CD8-positive, alpha-beta T cell (primary cell): ENCODE measurements at regions of chr11 and their contacts with region 1.

Region 1: DNA sequence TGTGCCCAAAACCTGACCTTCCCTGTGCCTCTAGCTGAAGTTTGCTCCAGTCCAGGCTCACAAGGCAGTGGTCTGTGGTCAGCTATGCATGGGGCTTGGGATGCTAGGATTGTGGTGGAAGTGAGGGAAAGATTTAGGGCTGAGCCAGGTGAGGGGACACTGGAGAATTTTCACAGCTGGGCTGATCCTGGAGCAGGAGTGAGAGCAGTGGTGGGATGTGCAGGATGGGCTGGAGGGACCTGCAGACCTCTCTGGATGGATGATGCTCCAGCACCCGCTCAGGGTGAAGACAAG is 23.9 kb upstream of the KDM2A start:
- DNase-seq: no peak
- ATAC-seq: no peak
- H3K4me3 ChIP-seq: no peak overlapping the region
- H3K4me3 Mint-ChIP-seq: no peak overlapping the region
- H3K27ac ChIP-seq: no peak overlapping the region
- H3K27ac Mint-ChIP-seq: no peak overlapping the region
- H3K4me1 ChIP-seq: peaks cover 6% of the 10 kb centered on the region
- H3K4me1 Mint-ChIP-seq: peaks cover 8% of the 10 kb centered on the region
- H3K27me3 ChIP-seq: no peaks in the 10 kb centered on the region
- H3K27me3 Mint-ChIP-seq: no peaks in the 10 kb centered on the region
- CTCF ChIP-seq: no peak

Region 2: GRCh38 chr11:66981976-66982578 is 113.1 kb before region 1 on chr11:
- CTCF ChIA-PET with region 1: no interaction called
- POLR2A ChIA-PET with region 1: no interaction called
- intact Hi-C with region 1: no loop called
- DNase-seq: peak in 6 of 9 experiments; percentile 17 to 42 (median 24)
- ATAC-seq: no peak
- H3K4me3 ChIP-seq: no peak overlapping the region
- H3K4me3 Mint-ChIP-seq: no peak overlapping the region
- H3K27ac ChIP-seq: no peak overlapping the region
- H3K27ac Mint-ChIP-seq: no peak overlapping the region
- H3K4me1 ChIP-seq: peaks cover 4% of the 10 kb centered on the region
- H3K4me1 Mint-ChIP-seq: peaks cover 7% of the 10 kb centered on the region
- H3K27me3 ChIP-seq: peaks cover 0 to 2% of the 10 kb centered on the region in 2 experiments
- H3K27me3 Mint-ChIP-seq: peaks cover 22% of the 10 kb centered on the region
- CTCF ChIP-seq: no peak

Region 3: DNA sequence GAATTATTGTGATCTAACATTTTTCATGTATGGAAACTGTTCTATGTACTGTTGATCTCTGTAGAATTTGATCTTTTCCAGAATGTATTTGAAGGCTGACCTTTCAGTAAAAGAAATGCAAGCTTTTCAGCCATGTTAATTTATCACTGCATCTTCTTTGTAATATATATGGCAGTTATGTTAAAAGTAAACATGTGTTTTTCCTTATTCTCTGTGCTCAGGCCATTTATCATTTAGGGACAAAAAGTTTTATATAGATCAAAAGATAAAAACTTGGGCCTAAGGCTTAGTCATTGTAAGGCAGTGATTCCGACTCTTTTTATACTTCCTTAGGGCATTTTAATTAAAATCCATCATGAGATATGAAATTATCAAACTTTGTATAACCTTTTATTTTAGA is 72.6 kb after region 1 on chr11:
- CTCF ChIA-PET with region 1: interaction called, 7 read pairs
- POLR2A ChIA-PET with region 1: no interaction called
- intact Hi-C with region 1: loop called in 1 of 2 experiments (anchors 1 kb)
- DNase-seq: no peak
- ATAC-seq: no peak
- H3K4me3 ChIP-seq: no peak overlapping the region
- H3K4me3 Mint-ChIP-seq: no peak overlapping the region
- H3K27ac ChIP-seq: no peak overlapping the region
- H3K27ac Mint-ChIP-seq: no peak overlapping the region
- H3K4me1 ChIP-seq: no peaks in the 10 kb centered on the region
- H3K4me1 Mint-ChIP-seq: peaks cover 48% of the 10 kb centered on the region
- H3K27me3 ChIP-seq: no peaks in the 10 kb centered on the region
- H3K27me3 Mint-ChIP-seq: no peaks in the 10 kb centered on the region
- CTCF ChIP-seq: no peak

Region 4: DNA sequence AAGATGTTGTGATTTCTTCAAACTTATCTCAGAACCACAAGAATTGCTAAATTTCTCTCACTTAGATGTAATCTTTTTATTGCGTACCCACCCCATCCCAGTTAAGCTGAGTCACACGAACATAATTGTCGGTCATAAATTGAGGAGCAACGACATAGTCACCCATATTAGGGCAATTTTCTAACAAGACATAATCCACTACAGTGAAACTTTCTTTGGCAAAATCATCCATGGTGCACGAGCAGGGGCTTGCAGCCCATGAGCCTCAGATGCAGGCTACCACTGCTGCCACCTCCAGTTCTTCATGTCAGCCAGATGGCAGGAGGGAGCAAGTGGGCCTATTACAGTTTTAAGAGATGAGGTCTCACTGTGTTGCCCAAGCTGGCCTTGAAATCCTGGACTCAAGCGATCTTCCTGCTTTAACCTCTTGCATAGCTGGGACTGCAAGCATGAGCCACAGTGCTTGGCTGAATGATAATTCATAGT is 100.9 kb after region 1 on chr11:
- CTCF ChIA-PET with region 1: no interaction called
- POLR2A ChIA-PET with region 1: no interaction called
- intact Hi-C with region 1: no loop called
- DNase-seq: no peak
- ATAC-seq: no peak
- H3K4me3 ChIP-seq: no peak overlapping the region
- H3K4me3 Mint-ChIP-seq: no peak overlapping the region
- H3K27ac ChIP-seq: no peak overlapping the region
- H3K27ac Mint-ChIP-seq: no peak overlapping the region
- H3K4me1 ChIP-seq: no peaks in the 10 kb centered on the region
- H3K4me1 Mint-ChIP-seq: no peaks in the 10 kb centered on the region
- H3K27me3 ChIP-seq: no peaks in the 10 kb centered on the region
- H3K27me3 Mint-ChIP-seq: no peaks in the 10 kb centered on the region
- CTCF ChIP-seq: no peak

Region 5: GRCh38 chr11:67277231-67277961 is 182.2 kb after region 1 on chr11:
- CTCF ChIA-PET with region 1: no interaction called
- POLR2A ChIA-PET with region 1: no interaction called
- intact Hi-C with region 1: no loop called
- DNase-seq: peak; percentile 82 to 98 (median 93)
- ATAC-seq: peak; percentile 92
- H3K4me3 ChIP-seq: peak overlapping the region; percentile 46 to 79
- H3K4me3 Mint-ChIP-seq: peak overlapping the region; percentile 79
- H3K27ac ChIP-seq: peak overlapping the region; percentile 74 to 76
- H3K27ac Mint-ChIP-seq: peak overlapping the region; percentile 95
- H3K4me1 ChIP-seq: peaks cover 100% of the 10 kb centered on the region
- H3K4me1 Mint-ChIP-seq: peaks cover 68% of the 10 kb centered on the region
- H3K27me3 ChIP-seq: no peaks in the 10 kb centered on the region
- H3K27me3 Mint-ChIP-seq: no peaks in the 10 kb centered on the region
- CTCF ChIP-seq: no peak